ENCODE measurements at regions of chr4 and their contacts with region 1.

Region 1: GRCh38 chr4:98658287-98659105 is at the start of gene TSPAN5:
- DNase-seq: no peak
- ATAC-seq: peak; percentile 86
- H3K4me3 ChIP-seq: peak within 1 kb of the TSS; percentile 78 to 89
- H3K27ac ChIP-seq: peak within 1 kb of the TSS; percentile 89
- H3K4me1 ChIP-seq: peaks cover 30% of the 10 kb centered on the region
- H3K27me3 ChIP-seq: no peaks in the 10 kb centered on the region
- CTCF ChIP-seq: no peak
- total RNA-seq, gene TSPAN5: 61.9 TPM

Region 2: DNA sequence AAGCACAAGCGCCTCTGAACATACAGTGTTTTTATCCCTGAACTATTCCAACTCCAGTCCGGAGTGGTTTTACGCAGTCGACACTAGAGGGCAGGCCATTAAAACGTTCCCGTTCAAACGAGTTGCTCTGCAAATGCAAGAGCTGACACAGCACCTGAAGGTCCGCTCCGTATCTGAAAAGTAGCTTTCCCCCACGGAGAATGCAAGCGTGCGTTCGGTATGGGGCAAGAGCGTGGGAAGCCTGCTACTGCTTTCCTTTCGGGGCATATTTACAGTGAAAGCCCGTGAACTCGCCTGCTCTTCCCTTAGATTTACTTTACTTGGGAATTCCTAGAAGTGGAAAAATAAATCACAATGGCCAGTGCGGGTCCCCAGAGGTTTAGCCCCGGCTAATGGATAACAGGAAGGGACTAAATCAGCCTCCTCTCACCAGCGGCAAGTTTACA is 190.8 kb before region 1 on chr4:
- CTCF ChIA-PET with region 1: interaction called, 7 read pairs
- POLR2A ChIA-PET with region 1: no interaction called
- in situ Hi-C with region 1: no loop called
- intact Hi-C with region 1: loop called (anchors 10 kb)
- DNase-seq: peak; percentile 67
- ATAC-seq: peak; percentile 95
- H3K4me3 ChIP-seq: peak overlapping the region; percentile 29 to 42
- H3K27ac ChIP-seq: peak overlapping the region; percentile 59; the same call in 1 of the 2 replicates
- H3K4me1 ChIP-seq: peaks cover 3% of the 10 kb centered on the region; the same call in 1 of the 2 replicates
- H3K27me3 ChIP-seq: no peaks in the 10 kb centered on the region
- CTCF ChIP-seq: peak; percentile 80

Region 3: DNA sequence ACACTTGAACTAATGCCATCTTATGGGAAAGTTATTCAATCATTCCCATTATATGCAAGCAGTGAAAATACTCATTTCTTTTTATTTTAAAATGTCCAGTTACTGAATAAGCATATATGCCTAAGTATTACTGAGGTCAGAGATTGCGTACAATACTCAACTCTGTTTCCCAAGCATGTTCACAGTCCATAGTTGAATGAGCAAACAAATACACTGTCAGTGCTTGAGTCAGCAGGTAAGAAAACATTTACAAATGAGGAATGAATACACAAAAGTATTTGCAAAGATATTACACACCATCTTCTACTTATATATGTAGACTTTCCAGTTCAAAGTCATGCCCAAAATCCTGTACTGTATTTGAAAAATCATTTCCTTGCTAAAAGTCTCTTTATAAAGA is 74.2 kb before region 1 on chr4:
- CTCF ChIA-PET with region 1: no interaction called
- POLR2A ChIA-PET with region 1: no interaction called
- in situ Hi-C with region 1: no loop called
- intact Hi-C with region 1: no loop called
- DNase-seq: peak; percentile 38
- ATAC-seq: peak; percentile 77; the same call in 1 of the 2 replicates
- H3K4me3 ChIP-seq: no peak overlapping the region
- H3K27ac ChIP-seq: no peak overlapping the region
- H3K4me1 ChIP-seq: peaks cover 10% of the 10 kb centered on the region
- H3K27me3 ChIP-seq: no peaks in the 10 kb centered on the region
- CTCF ChIP-seq: no peak

Region 4: GRCh38 chr4:98677799-98678198 is 19.3 kb after region 1 on chr4:
- CTCF ChIA-PET with region 1: no interaction called
- POLR2A ChIA-PET with region 1: interaction called, 10 read pairs
- in situ Hi-C with region 1: no loop called
- intact Hi-C with region 1: no loop called
- DNase-seq: no peak
- ATAC-seq: no peak
- H3K4me3 ChIP-seq: no peak overlapping the region
- H3K27ac ChIP-seq: peak overlapping the region; percentile 48; the same call in 1 of the 2 replicates
- H3K4me1 ChIP-seq: peaks cover 4% of the 10 kb centered on the region; the same call in 1 of the 2 replicates
- H3K27me3 ChIP-seq: no peaks in the 10 kb centered on the region
- CTCF ChIP-seq: no peak

Region 5: DNA sequence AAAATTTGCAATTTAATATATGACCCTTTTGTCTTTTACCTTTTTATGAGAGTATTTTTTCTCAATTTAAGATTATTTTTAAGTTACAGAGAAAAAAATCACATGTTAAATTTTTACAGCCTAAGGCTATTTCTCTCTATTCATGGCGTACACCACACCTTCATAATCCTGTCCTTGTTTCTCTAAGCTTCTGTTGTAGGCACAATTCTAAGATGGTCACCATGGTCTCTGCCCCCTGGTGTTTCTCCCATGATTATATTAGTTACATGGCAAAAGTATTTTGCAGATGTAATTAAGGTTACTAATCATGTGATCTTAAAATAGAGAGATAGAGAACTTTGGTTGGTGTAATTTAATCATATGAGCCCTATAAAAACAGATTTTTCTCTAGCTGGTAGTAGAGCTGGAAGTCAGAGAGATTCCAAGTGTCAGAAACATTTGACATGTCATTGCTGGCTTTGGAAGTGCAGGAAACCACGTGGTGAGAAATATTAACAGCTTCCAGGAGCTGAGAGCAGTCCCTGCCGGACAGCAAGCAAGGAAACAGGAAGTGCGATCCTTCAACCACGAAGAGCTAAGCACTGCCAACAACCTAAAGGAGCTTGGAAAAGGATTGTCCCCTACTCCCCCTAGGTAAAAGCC is 180.6 kb after region 1 on chr4:
- CTCF ChIA-PET with region 1: no interaction called
- POLR2A ChIA-PET with region 1: no interaction called
- in situ Hi-C with region 1: no loop called
- intact Hi-C with region 1: loop called (anchors 10 kb)
- DNase-seq: no peak
- ATAC-seq: no peak
- H3K4me3 ChIP-seq: no peak overlapping the region
- H3K27ac ChIP-seq: no peak overlapping the region
- H3K4me1 ChIP-seq: no peaks in the 10 kb centered on the region
- H3K27me3 ChIP-seq: no peaks in the 10 kb centered on the region
- CTCF ChIP-seq: no peak

Region 6: GRCh38 chr4:98928505-98929340 is 270.2 kb after region 1 on chr4 and contains the start of gene EIF4E:
- CTCF ChIA-PET with region 1: no interaction called
- POLR2A ChIA-PET with region 1: interaction called, 3 read pairs
- in situ Hi-C with region 1: no loop called
- intact Hi-C with region 1: loop called (anchors 5 kb)
- DNase-seq: peak; percentile 90
- ATAC-seq: peak; percentile 84
- H3K4me3 ChIP-seq: peak within 1 kb of the TSS; percentile 67 to 75
- H3K27ac ChIP-seq: peak within 1 kb of the TSS; percentile 96
- H3K4me1 ChIP-seq: peaks cover 10% of the 10 kb centered on the region
- H3K27me3 ChIP-seq: no peaks in the 10 kb centered on the region
- CTCF ChIP-seq: no peak
- total RNA-seq, gene EIF4E: 89.7 TPM

Measured in Panc1 (cell line).